Gastrocnemius medialis (tissue), 4 donors: ENCODE measurements at regions of chr21 and their contacts with region 1.

Region 1: DNA sequence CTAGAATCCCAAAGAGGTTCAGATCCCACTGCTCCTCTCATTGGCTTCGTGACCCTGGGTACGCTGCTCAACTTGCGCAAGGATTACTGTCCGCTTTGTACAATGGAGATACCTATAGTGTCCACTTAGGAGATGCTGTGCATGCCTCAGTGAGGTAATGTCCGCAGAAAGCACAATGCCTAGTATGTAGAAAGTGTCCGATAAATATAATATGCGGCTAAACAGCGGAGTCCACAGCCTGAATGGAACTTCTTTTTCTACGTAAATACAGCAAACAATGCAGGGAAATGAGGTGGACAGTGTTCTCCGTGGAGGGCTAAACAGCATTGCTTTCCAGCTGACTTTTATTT is 152.7 kb downstream of the DYRK1A start:
- DNase-seq: no peak
- ATAC-seq: no peak
- H3K4me3 ChIP-seq: no peak overlapping the region
- H3K27ac ChIP-seq: peak overlapping the region in 1 of 4 donors; percentile 31
- H3K4me1 ChIP-seq: peaks cover 7 to 14% of the 10 kb centered on the region in 2 donors
- H3K27me3 ChIP-seq: no peaks in the 10 kb centered on the region
- CTCF ChIP-seq: no peak
- POLR2A ChIP-seq: no peak

Region 2: DNA sequence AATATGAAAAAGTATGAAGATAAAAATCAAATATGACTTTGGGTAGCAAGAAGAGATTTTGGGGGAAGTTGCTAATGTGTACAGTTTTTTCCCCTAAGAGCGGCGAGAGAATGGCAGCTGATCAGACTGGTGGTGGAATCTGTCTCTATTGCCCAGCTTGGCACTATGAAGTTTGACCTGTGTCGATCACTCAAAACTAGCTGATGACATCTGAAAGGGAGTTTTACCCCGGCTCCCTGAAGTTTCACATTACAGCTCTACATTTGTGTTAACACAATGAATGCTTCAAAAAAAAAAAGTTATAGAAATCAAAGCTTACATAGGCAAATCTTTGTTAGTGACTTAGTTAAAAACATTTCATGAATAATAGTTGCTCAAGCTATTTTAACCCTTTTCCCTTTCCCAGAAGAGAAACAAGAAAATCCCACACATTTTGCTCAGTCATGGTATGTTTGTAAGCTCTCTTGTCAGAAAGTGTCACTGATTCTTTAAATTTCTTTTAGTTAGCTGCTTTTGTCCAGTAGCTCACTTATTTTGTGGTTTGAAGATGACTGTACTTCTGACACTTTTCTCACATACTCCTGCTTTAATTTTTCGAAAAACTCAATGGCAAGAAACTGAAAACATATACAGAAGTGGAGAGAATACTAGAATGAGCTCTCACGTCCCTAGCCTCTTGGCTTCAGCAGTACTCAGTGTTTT is 111.4 kb before region 1 on chr21:
- in situ Hi-C with region 1: no loop called
- intact Hi-C with region 1: no loop called
- DNase-seq: no peak
- ATAC-seq: peak; percentile 32 to 73
- H3K4me3 ChIP-seq: peak overlapping the region in 1 of 4 donors; percentile 0
- H3K27ac ChIP-seq: peak overlapping the region; percentile 32 to 61 (median 53)
- H3K4me1 ChIP-seq: peaks cover 89 to 96% of the 10 kb centered on the region in 2 donors
- H3K27me3 ChIP-seq: no peaks in the 10 kb centered on the region
- CTCF ChIP-seq: no peak
- POLR2A ChIP-seq: no peak

Region 3: DNA sequence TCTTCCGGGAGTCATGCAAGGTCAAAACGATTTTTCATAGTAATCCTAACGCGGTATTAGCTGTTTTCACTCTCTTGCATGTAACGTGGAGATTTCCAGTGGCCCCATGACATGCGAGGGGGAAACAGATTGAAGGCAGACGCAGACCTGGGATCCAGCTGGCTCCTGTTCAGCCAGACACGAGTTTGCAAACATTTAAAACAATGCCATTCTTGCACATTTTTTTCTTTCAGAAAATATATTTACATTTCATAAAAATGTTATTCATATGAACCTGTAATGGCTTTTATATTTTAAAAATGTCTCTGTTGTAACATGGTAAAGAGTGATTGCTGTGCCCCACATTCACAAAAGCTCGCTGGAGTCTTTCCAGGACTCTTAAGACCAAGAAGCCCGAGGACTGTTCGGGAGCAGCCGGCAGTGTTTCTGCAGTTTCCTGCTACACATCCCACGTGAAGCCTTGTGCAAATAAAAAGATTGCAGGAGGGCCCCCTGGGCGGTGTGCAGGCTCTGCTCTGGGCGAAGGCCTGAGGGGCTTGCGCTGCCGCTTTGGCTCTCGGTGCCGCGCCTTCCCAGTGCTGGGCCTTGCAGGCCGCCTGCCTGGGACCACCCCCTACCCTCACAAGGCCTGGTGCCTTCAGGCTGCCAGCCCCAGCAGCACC is 32.2 kb after region 1 on chr21:
- in situ Hi-C with region 1: no loop called
- intact Hi-C with region 1: loop called (anchors 5 kb)
- DNase-seq: no peak
- ATAC-seq: no peak
- H3K4me3 ChIP-seq: no peak overlapping the region
- H3K27ac ChIP-seq: peak overlapping the region; percentile 83 to 94 (median 91)
- H3K4me1 ChIP-seq: peaks cover 39 to 58% of the 10 kb centered on the region in 2 donors
- H3K27me3 ChIP-seq: no peaks in the 10 kb centered on the region
- CTCF ChIP-seq: no peak
- POLR2A ChIP-seq: no peak

Region 4: DNA sequence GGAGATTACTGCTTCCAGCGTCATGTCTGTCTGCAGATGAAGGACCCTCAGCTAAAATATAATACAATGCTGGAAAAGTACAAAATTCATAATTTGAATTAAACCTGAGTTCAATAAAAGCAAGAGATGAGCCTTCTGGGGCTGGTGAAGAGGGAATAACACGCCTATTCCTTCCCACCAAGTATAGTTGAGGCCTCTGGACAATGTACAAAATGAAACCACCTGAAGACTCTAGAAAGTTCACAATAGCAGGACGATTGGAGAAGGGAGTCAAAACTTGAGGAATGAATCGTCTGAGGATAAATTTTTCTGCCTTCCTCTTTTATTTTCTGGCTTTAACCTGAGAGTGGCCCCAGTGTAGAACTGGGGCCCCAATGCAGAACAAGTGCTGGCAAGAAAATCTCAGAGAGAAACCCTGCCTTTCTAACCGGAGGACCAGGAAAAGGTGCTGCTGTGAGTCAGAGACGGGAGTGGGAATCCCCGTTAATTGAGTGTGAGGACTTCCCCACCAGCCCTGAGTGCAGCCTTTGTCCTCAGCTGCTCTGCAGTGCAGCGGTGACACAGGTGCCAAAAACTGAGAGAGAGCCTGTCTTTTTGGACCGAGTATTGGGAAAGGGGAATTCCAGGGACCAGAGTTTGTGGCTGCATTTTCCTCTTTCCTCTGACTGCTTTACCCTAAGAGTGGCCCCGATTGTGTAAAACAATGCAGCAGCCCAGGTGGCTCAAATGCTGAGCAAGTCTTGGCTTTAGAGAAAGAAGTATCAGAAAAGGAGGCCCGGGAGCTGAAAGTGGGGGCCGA is 112.3 kb after region 1 on chr21:
- in situ Hi-C with region 1: no loop called
- intact Hi-C with region 1: no loop called
- DNase-seq: no peak
- ATAC-seq: peak in 1 of 2 donors; percentile 81
- H3K4me3 ChIP-seq: peak overlapping the region in 1 of 4 donors; percentile 34
- H3K27ac ChIP-seq: peak overlapping the region in 3 of 4 donors; percentile 19 to 54 (median 24)
- H3K4me1 ChIP-seq: peaks cover 0 to 6% of the 10 kb centered on the region in 2 donors
- H3K27me3 ChIP-seq: no peaks in the 10 kb centered on the region
- CTCF ChIP-seq: no peak
- POLR2A ChIP-seq: no peak